CD14-positive monocyte (primary cell): ENCODE measurements at regions of chr16 and their contacts with region 1.

Region 1: DNA sequence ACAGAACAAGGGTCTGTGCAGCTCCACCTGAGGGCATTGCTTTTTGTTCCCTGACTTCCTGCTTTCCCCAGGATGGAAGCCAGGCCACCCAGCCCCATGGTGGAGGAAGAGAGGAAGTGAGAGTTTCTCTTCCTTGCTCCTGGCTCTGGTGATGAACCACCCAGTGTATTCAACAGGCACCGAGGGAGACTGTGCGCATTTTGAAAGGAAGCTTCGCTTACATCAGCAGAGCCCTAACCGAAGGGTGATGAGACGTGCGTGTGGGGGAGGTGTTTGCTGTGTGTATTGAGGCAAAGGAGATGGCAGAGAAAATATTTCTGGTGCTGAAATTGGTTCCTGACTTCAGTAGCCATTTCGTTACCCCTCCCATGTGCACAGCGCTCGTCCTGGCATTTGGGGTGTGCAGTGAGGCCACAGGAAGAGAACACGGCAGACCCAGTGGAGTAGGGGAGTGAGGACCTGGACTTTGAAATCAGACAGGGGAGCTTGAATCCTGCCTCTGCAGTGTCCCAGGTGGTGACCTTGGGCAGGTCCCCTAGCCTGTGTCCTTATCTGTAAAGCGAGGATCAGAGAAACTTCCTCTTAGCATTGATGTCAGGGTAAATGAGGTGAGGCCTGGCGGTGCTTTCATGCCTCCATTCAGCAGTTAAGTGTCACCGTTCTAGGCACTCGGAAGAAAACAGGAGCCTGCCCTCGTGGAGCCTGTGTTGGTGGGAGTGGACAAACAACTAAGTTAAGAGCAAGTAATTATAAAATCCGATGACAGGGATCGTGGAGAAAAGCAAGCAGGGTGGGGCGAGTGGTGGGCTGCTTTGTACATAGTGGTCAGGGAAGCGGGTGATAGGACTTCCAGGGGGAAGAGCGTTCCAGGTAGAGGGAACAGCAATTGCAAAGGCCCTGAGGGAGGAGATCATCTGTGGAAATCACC is 7.4 kb downstream of the CMIP start:
- DNase-seq: peak; percentile 84 to 93 (median 87)
- H3K4me3 ChIP-seq: peak overlapping the region in 2 of 3 experiments; percentile 6 to 59
- H3K4me3 Mint-ChIP-seq: peak overlapping the region; percentile 78 to 87
- H3K27ac ChIP-seq: peak overlapping the region; percentile 72 to 84
- H3K27ac Mint-ChIP-seq: peak overlapping the region; percentile 92 to 97 (median 95)
- H3K4me1 ChIP-seq: peaks cover 89 to 97% of the 10 kb centered on the region in 2 donors
- H3K4me1 Mint-ChIP-seq: peaks cover 94% of the 10 kb centered on the region
- H3K27me3 ChIP-seq: no peaks in the 10 kb centered on the region
- H3K27me3 Mint-ChIP-seq: peaks cover 0 to 4% (median 0%) of the 10 kb centered on the region in 3 donors
- CTCF ChIP-seq: no peak

Region 2: DNA sequence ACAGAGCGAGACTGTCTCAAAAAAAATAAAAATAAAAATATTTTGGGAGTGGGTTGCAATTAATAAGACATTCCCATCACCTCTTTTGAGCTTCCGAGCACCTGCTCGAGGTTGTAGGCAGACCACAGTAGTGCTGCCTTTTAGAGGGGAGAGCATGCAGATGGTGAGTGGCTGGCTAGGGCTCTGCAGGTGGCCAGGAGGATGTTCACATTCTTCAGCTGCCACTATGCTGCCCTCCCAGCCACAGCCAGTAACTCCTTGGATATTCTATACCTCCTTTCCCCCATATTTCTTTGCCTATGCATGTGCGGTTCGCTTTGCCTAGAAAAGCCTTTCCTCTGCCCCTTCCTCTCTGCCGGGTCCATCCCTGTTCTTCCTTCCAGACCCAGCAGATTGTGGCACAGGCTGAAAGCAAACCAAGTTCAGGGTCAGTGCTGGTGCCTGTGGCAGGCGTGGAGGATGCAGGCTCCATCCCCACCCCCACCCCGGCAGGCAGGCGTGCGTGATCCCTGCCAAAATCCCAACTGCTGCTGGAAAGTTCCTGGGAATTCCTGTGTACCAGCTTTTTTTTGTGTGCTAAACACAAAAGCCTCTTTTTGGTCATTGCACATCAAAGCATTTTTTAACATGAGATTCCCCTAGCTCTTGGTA is 41.2 kb before region 1 on chr16:
- intact Hi-C with region 1: loop called in 1 of 2 experiments (anchors 5 kb)
- DNase-seq: no peak
- H3K4me3 ChIP-seq: no peak overlapping the region
- H3K4me3 Mint-ChIP-seq: no peak overlapping the region
- H3K27ac ChIP-seq: no peak overlapping the region
- H3K27ac Mint-ChIP-seq: peak overlapping the region in 1 of 7 donors; percentile 23
- H3K4me1 ChIP-seq: no peaks in the 10 kb centered on the region
- H3K4me1 Mint-ChIP-seq: no peaks in the 10 kb centered on the region
- H3K27me3 ChIP-seq: no peaks in the 10 kb centered on the region
- H3K27me3 Mint-ChIP-seq: peaks cover 4 to 15% (median 5%) of the 10 kb centered on the region in 3 donors
- CTCF ChIP-seq: no peak

Region 3: GRCh38 chr16:81537721-81538561 is 85.9 kb after region 1 on chr16:
- intact Hi-C with region 1: no loop called
- DNase-seq: no peak
- H3K4me3 ChIP-seq: no peak overlapping the region
- H3K4me3 Mint-ChIP-seq: no peak overlapping the region
- H3K27ac ChIP-seq: no peak overlapping the region
- H3K27ac Mint-ChIP-seq: peak overlapping the region in 2 of 7 donors; percentile 63 to 79
- H3K4me1 ChIP-seq: peaks cover 3 to 8% of the 10 kb centered on the region in 2 donors
- H3K4me1 Mint-ChIP-seq: peaks cover 17% of the 10 kb centered on the region
- H3K27me3 ChIP-seq: no peaks in the 10 kb centered on the region
- H3K27me3 Mint-ChIP-seq: peaks cover 0 to 2% (median 2%) of the 10 kb centered on the region in 3 donors
- CTCF ChIP-seq: no peak

Region 4: GRCh38 chr16:81610144-81610842 is 158.3 kb after region 1 on chr16:
- intact Hi-C with region 1: no loop called
- DNase-seq: no peak
- H3K4me3 ChIP-seq: no peak overlapping the region
- H3K4me3 Mint-ChIP-seq: no peak overlapping the region
- H3K27ac ChIP-seq: no peak overlapping the region
- H3K27ac Mint-ChIP-seq: peak overlapping the region in 2 of 7 donors; percentile 39 to 76
- H3K4me1 ChIP-seq: peaks cover 3 to 6% of the 10 kb centered on the region in 2 donors
- H3K4me1 Mint-ChIP-seq: peaks cover 22% of the 10 kb centered on the region
- H3K27me3 ChIP-seq: no peaks in the 10 kb centered on the region
- H3K27me3 Mint-ChIP-seq: peaks cover 0 to 4% (median 0%) of the 10 kb centered on the region in 3 donors
- CTCF ChIP-seq: no peak